ENCODE measurements at regions of chr17 and their contacts with region 1.

Region 1: GRCh38 chr17:4625181-4625617 is 16.3 kb downstream of the ALOX15 start:
- DNase-seq: no peak
- ATAC-seq: peak; percentile 50 to 76 (median 58)
- H3K4me3 ChIP-seq: no peak overlapping the region
- H3K27ac ChIP-seq: peak overlapping the region in 1 of 10 donors; percentile 37
- H3K4me1 ChIP-seq: peaks cover 0 to 18% (median 13%) of the 10 kb centered on the region in 9 donors
- H3K27me3 ChIP-seq: peaks cover 0 to 3% (median 0%) of the 10 kb centered on the region in 7 donors
- CTCF ChIP-seq: no peak

Region 2: DNA sequence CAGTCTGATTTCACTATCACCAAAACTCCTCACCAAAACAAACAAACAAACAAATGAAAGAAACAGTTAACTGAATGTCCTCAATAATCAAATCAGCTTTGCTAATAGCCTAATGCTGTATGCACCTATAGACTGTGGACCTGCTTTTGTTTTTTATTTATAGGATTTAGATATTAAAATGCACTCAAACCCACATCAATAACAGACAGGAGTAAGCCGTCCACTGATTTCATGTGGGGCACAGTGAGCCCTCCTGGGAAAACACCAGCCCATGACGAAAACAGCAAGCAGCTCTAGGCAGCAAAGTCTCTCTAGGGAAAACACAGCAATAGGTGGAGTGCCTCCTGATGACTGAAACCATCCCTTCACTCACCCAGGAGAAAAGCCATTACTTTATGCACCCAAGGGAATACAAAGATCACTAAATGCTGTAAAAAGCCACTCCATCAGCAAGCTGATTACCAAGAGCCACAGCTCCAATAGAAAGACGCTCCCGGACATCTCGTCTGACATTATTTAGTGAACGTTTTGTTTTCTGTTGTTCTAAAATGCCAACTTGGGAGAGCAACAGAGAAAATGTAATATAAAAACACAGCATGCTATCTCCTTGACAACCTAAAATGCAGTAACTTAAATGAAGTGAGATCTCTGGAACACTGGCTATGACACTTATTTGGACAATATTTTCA is 409.2 kb before region 1 on chr17:
- intact Hi-C with region 1: loop called in 1 of 10 experiments (anchors 10 kb)
- DNase-seq: no peak
- ATAC-seq: peak in 2 of 8 donors; percentile 42 to 44
- H3K4me3 ChIP-seq: no peak overlapping the region
- H3K27ac ChIP-seq: peak overlapping the region in 7 of 10 donors; percentile 7 to 83 (median 60)
- H3K4me1 ChIP-seq: peaks cover 0 to 39% (median 26%) of the 10 kb centered on the region in 9 donors
- H3K27me3 ChIP-seq: no peaks in the 10 kb centered on the region
- CTCF ChIP-seq: no peak

Region 3: GRCh38 chr17:4565209-4566141 is 59.7 kb before region 1 on chr17:
- intact Hi-C with region 1: loop called (anchors 1 to 5 kb)
- DNase-seq: peak in 1 of 2 donors; percentile 68
- ATAC-seq: peak; percentile 64 to 93 (median 84)
- H3K4me3 ChIP-seq: no peak overlapping the region
- H3K27ac ChIP-seq: peak overlapping the region in 3 of 10 donors; percentile 19 to 43 (median 32)
- H3K4me1 ChIP-seq: peaks cover 0 to 32% (median 15%) of the 10 kb centered on the region in 9 donors
- H3K27me3 ChIP-seq: no peaks in the 10 kb centered on the region
- CTCF ChIP-seq: peak; percentile 75 to 87 (median 81)

Region 4: GRCh38 chr17:4583782-4584100 is 41.5 kb before region 1 on chr17:
- intact Hi-C with region 1: loop called in 1 of 10 experiments (anchors 5 kb)
- DNase-seq: peak in 1 of 2 donors; percentile 47
- ATAC-seq: peak; percentile 60 to 74 (median 70)
- H3K4me3 ChIP-seq: peak overlapping the region; percentile 7 to 70 (median 60)
- H3K27ac ChIP-seq: peak overlapping the region; percentile 34 to 88 (median 78)
- H3K4me1 ChIP-seq: peaks cover 13 to 56% (median 35%) of the 10 kb centered on the region in 9 donors
- H3K27me3 ChIP-seq: peaks cover 0 to 48% (median 23%) of the 10 kb centered on the region in 7 donors
- CTCF ChIP-seq: peak; percentile 11 to 55 (median 46)